ENCODE measurements at regions of chr17 and their contacts with region 1.

Region 1: GRCh38 chr17:15351925-15352324 is 10.5 kb upstream of the TEKT3 start:
- DNase-seq: peak; percentile 63
- H3K4me3 ChIP-seq: no peak overlapping the region
- CTCF ChIP-seq: no peak

Region 2: DNA sequence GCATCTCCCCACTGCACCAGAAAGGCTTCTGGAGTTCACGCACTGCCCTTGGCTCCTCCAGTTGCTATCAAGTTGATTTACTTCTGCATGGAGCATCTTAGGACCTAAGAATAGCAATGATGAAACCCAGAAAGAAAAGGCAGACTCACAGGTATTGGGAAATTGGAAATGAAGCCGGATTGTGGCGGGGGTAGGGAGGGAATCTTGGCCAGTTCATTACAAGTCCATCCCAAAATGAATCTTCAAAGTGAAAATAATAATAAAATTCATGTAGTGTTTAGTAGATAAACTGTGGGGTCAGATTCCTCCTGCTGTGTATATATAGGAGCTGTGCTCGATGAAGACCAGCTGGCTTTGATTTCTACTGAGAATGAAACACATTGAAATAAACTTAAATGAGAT is 44.2 kb before region 1 on chr17:
- CTCF ChIA-PET with region 1: no interaction called
- POLR2A ChIA-PET with region 1: no interaction called
- DNase-seq: no peak
- H3K4me3 ChIP-seq: no peak overlapping the region
- CTCF ChIP-seq: no peak

Region 3: GRCh38 chr17:15364615-15365014 is 12.7 kb after region 1 on chr17:
- CTCF ChIA-PET with region 1: interaction called, 16 read pairs
- POLR2A ChIA-PET with region 1: interaction called, 3 read pairs
- DNase-seq: no peak
- H3K4me3 ChIP-seq: no peak overlapping the region
- CTCF ChIP-seq: no peak

Measured in AG04449 (cell line).